ENCODE measurements at regions of chr5 and their contacts with region 1.

Region 1: GRCh38 chr5:172188033-172188892 is at the start of gene STK10:
- DNase-seq: peak; percentile 98
- H3K4me3 ChIP-seq: peak within 1 kb of the TSS; percentile 70 to 99
- H3K27ac ChIP-seq: peak within 1 kb of the TSS; percentile 67 to 80
- H3K4me1 ChIP-seq: peaks cover 0 to 5% of the 10 kb centered on the region in 2 experiments; a peak in 1 of 4 replicates
- H3K27me3 ChIP-seq: no peaks in the 10 kb centered on the region
- CTCF ChIP-seq: peak; percentile 80
- EP300 ChIP-seq: 0 out of 4 replicates have a peak, but pooled peaks of 1 of the 2 experiments have one; percentile 30
- RAD21 ChIP-seq: peak; percentile 88
- polyA plus RNA-seq, gene STK10: 10.1 and 11.0 TPM in 2 replicates

Region 2: DNA sequence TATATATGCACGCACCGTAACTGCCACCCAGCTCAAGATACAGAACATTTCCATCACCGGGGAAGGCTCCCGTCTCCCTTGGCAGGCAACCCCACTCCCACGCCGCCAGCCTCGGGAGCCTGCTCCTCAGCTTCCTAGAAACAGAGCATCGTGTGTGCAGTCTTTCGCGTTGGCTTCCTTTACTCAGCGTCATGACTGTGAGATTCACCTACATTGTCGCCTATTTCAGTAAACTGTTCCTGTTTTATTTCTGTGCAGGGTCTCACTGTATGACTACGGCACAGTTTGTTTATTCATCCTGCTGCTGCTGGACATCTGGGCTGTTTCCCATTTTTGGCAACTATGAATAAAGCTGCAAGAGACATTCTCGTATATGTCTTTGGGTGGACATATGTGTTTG is 90.9 kb before region 1 on chr5:
- CTCF ChIA-PET with region 1: interaction called, 22 read pairs
- POLR2A ChIA-PET with region 1: interaction called, 3 read pairs
- DNase-seq: no peak
- H3K4me3 ChIP-seq: no peak overlapping the region
- H3K27ac ChIP-seq: no peak overlapping the region
- H3K4me1 ChIP-seq: peaks cover 1 to 6% of the 10 kb centered on the region in 2 experiments; a peak in 2 of 4 replicates
- H3K27me3 ChIP-seq: no peaks in the 10 kb centered on the region
- CTCF ChIP-seq: no peak
- EP300 ChIP-seq: no peak
- RAD21 ChIP-seq: no peak

Region 3: DNA sequence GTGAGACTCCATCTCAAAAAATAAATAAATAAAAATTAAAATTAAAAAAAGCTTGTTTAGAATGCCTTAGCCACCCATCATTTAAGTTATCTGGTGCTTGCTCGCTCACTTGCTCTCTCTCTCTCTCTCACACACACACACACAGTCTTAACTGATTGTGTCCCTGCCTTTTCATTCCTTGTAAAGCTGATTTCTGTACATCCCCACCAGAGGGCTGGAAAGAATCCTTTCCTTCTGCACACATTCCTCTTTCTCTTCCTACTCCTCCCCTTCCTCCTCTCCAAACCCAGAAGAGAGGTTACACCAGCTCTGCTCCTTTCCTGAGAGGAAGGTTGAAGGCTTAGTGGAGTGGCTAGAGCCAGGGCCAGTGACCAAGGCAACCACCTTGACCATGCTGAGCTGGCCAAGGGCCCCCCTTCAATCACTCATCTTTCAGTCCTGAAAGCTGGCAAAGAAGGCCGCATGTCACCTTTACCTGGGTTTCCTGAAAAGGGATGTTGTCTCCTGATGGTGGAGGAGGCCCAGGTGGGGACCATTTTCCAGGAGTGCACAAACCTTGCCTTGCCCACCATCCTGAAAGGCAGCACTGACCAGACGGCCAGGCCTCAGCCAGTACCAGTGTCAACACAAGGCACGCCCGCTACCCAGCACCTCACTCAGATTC is 25.8 kb before region 1 on chr5:
- CTCF ChIA-PET with region 1: interaction called, 18 read pairs
- POLR2A ChIA-PET with region 1: no interaction called
- DNase-seq: no peak
- H3K4me3 ChIP-seq: no peak overlapping the region
- H3K27ac ChIP-seq: no peak overlapping the region
- H3K4me1 ChIP-seq: no peaks in the 10 kb centered on the region; a peak in 1 of 4 replicates
- H3K27me3 ChIP-seq: no peaks in the 10 kb centered on the region
- CTCF ChIP-seq: 0 out of 2 replicates have a peak, but pooled peaks have one; percentile 14
- EP300 ChIP-seq: no peak
- RAD21 ChIP-seq: no peak

Region 4: GRCh38 chr5:172199446-172199845 is 11.2 kb after region 1 on chr5:
- CTCF ChIA-PET with region 1: interaction called, 12 read pairs
- POLR2A ChIA-PET with region 1: no interaction called
- DNase-seq: no peak
- H3K4me3 ChIP-seq: no peak overlapping the region
- H3K27ac ChIP-seq: no peak overlapping the region
- H3K4me1 ChIP-seq: no peaks in the 10 kb centered on the region
- H3K27me3 ChIP-seq: no peaks in the 10 kb centered on the region
- CTCF ChIP-seq: no peak
- EP300 ChIP-seq: no peak
- RAD21 ChIP-seq: no peak

Region 5: GRCh38 chr5:172293054-172293744 is 104.9 kb after region 1 on chr5:
- CTCF ChIA-PET with region 1: interaction called, 11 read pairs
- POLR2A ChIA-PET with region 1: interaction called, 4 read pairs
- DNase-seq: peak; percentile 76
- H3K4me3 ChIP-seq: peak overlapping the region in 1 of 2 experiments; percentile 3; a peak in 1 of 4 replicates
- H3K27ac ChIP-seq: no peak overlapping the region
- H3K4me1 ChIP-seq: peaks cover 0 to 4% of the 10 kb centered on the region in 2 experiments; a peak in 1 of 4 replicates
- H3K27me3 ChIP-seq: no peaks in the 10 kb centered on the region
- CTCF ChIP-seq: peak; percentile 93
- EP300 ChIP-seq: no peak
- RAD21 ChIP-seq: peak; percentile 93

Region 6: GRCh38 chr5:172312286-172312685 is 124.0 kb after region 1 on chr5:
- CTCF ChIA-PET with region 1: no interaction called
- POLR2A ChIA-PET with region 1: no interaction called
- DNase-seq: no peak
- H3K4me3 ChIP-seq: no peak overlapping the region
- H3K27ac ChIP-seq: no peak overlapping the region
- H3K4me1 ChIP-seq: no peaks in the 10 kb centered on the region
- H3K27me3 ChIP-seq: no peaks in the 10 kb centered on the region
- CTCF ChIP-seq: no peak
- EP300 ChIP-seq: no peak
- RAD21 ChIP-seq: no peak